PC-3 (cell line): ENCODE measurements at regions of chr10 and their contacts with region 1.

Region 1: DNA sequence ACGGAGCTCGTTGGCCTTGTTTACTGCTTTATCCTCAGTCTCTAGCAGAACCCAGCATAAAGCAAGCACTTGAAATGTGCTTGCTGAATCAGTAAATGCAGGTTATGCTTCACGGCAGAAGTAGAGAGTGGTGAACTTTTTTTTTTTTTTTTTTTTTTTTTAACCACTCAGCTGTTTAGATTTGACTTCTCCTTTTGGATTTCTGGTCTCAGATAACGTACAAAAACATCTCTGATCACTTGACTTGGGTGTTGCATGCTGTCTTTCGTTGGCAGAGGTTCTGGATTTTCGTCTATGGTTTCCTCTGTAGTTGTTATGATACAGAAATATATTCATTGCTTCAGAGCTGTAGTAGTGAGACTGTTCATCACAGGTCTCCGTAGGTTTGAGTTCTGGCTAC is 242.5 kb upstream of the HABP2 start:
- DNase-seq: no peak
- ATAC-seq: no peak
- H3K4me3 ChIP-seq: no peak overlapping the region
- H3K27ac ChIP-seq: no peak overlapping the region
- H3K4me1 ChIP-seq: no peaks in the 10 kb centered on the region
- H3K27me3 ChIP-seq: no peaks in the 10 kb centered on the region
- CTCF ChIP-seq: no peak

Region 2: DNA sequence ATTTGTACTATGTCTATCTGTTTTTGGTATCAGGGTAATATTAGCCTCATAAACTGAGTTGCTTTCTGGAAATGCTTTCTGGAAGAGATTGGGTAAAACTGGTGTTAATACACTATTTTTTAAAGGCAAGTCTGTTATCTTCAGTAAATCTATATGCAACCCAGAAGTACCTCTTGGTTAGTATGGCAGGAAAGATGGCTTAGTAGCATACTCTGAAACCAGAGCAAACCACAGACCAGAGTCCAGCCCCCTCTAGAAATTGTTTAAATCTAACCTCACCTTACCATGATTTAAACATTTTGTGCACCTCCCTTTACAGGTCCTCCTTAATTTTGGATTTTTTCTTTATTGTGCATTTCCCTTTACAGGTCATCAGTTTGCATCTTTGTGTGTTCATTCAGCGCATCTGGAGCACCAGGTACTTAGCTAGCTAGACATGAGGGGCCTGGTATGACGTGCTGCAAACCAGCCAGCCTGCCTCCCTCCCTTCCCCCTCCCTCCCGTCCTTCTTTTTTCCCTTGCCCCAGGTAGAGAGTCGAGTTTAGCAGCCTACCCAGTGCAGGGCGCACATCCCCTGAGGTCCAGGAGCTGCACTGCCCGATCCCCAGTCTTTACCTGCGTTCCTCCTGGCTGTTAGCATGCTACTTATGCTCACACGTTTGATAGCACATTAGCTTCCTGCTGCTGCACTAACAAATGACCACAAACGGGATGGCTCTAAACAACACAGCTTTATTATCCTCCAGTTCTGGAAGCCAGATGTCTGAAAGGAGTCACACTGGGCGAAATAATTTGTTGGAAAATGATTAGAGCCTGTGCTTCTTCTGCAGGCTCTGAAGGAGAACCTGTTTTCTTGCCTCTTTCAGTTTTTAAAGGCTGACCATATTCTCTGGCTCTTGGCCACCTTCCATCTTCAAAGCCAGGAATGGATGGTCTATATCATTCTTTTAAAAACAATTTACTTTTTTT is 57.4 kb before region 1 on chr10:
- CTCF ChIA-PET with region 1: interaction called, 16 read pairs
- POLR2A ChIA-PET with region 1: no interaction called
- intact Hi-C with region 1: no loop called
- DNase-seq: no peak
- ATAC-seq: no peak
- H3K4me3 ChIP-seq: no peak overlapping the region
- H3K27ac ChIP-seq: no peak overlapping the region
- H3K4me1 ChIP-seq: no peaks in the 10 kb centered on the region
- H3K27me3 ChIP-seq: peaks cover 9% of the 10 kb centered on the region; the same call in 1 of the 2 replicates
- CTCF ChIP-seq: no peak

Region 3: DNA sequence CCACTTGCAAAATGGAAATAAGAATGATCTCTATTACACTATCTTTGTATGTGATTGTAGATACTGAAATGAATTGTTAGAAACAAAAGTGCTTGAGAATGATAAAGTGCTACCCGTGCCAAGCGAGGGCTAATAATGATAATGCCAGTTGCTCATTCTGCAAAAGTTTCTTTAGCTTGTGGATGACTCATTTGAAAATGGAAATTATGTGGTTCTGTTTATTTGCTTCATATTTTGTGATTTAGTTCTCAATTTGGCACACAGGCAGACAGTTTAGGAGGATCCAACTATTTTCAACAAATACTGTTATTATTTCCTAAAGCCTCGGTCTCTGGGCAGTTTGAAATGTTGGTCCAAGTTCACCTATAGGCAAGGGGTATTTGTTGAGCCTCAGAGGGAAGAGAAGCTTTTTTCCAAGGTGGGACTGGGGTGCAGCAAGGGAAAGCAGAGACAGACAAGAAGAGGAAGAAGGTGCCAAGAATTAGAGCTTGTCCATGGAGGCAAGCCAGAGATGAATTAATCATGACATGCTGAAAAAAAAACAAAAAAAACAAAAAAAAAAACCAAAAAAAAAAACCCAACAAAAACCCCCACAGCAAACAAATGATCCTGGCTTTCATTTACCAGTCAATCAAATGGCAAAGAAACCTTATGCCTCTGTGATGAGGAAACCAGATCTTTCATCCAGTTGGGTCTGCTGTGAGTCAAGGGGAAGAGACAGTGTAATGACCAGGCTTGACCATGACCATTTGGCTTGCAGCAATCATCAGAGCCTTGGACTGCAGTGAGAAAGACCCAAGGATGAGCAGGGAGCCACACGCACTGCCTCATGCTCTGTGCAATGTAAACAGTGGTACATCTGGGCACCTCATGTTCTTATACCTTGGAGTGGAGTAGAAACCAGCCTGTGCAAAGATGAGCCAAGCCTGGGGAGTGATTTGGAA is 42.5 kb before region 1 on chr10:
- CTCF ChIA-PET with region 1: no interaction called
- POLR2A ChIA-PET with region 1: no interaction called
- intact Hi-C with region 1: no loop called
- DNase-seq: no peak
- ATAC-seq: no peak
- H3K4me3 ChIP-seq: no peak overlapping the region
- H3K27ac ChIP-seq: no peak overlapping the region
- H3K4me1 ChIP-seq: no peaks in the 10 kb centered on the region
- H3K27me3 ChIP-seq: no peaks in the 10 kb centered on the region
- CTCF ChIP-seq: no peak

Region 4: DNA sequence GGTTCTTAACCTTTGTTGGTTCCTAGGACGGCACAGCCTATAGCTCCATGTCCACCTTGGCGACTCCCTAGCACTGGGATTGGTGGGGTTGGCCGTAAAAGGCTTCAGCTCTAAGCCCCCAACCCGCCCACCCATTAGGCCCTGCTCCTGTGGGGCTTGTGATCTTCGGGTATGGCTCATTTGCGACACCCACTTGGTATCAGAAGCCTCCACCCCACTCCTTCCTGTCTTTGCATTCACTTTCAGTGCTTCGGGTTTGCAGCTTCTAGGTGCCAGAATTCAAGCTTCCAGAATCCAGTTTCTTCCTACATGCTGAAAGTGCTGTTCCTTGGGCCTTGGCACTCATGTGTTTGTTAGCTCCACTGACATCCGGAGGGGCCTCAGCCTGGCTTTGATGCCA is 282.0 kb after region 1 on chr10:
- CTCF ChIA-PET with region 1: no interaction called
- POLR2A ChIA-PET with region 1: interaction called, 14 read pairs
- intact Hi-C with region 1: no loop called
- DNase-seq: no peak
- ATAC-seq: no peak
- H3K4me3 ChIP-seq: no peak overlapping the region
- H3K27ac ChIP-seq: no peak overlapping the region
- H3K4me1 ChIP-seq: no peaks in the 10 kb centered on the region
- H3K27me3 ChIP-seq: peaks cover 50% of the 10 kb centered on the region
- CTCF ChIP-seq: no peak